ENCODE measurements at regions of chr6 and their contacts with region 1.

Region 1: GRCh38 chr6:21953831-21954801 is 342.7 kb downstream of the PRL start:
- DNase-seq: no peak
- H3K4me3 ChIP-seq: no peak overlapping the region
- H3K27ac ChIP-seq: no peak overlapping the region
- H3K4me1 ChIP-seq: peaks cover 0 to 9% (median 3%) of the 10 kb centered on the region in 4 experiments; a peak in 4 of 7 replicates
- H3K27me3 ChIP-seq: no peaks in the 10 kb centered on the region
- CTCF ChIP-seq: no peak
- EP300 ChIP-seq: no peak
- POLR2A ChIP-seq: no peak
- RAD21 ChIP-seq: no peak

Region 2: DNA sequence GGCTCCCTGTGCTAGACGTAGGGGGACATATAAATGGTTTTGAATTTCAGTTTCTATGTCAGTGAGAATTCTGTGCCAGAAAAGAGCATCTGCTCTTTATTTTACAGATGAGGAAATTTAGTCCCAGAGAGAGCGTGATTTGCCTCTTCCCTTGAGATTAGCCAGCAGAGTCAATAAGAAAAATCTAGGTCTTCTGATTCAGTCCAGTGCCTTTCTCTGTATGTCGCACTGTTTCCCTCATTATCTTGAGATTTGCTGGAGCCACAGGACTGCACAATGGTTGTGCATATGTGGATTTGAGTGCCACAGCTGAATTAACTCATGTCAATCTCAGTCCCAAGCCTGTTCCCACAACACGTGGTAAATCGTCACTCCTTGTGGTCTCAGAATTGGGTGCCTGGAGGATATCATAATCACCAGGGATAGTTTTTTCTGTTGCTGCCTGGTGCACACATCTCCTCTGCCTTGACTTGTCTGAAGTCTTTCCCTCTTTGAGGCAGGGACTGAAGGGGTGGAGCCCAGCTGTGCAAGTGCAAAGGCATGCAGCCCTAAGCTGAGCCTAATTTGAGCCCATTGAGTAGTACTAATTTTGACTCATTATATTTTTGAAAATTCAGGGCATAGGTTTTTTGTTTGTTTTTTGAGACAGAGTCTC is 83.9 kb before region 1 on chr6:
- CTCF ChIA-PET with region 1: no interaction called
- POLR2A ChIA-PET with region 1: no interaction called
- DNase-seq: no peak
- H3K4me3 ChIP-seq: no peak overlapping the region
- H3K27ac ChIP-seq: no peak overlapping the region
- H3K4me1 ChIP-seq: peaks cover 0 to 10% (median 2%) of the 10 kb centered on the region in 4 experiments; a peak in 4 of 7 replicates
- H3K27me3 ChIP-seq: no peaks in the 10 kb centered on the region
- CTCF ChIP-seq: no peak
- EP300 ChIP-seq: no peak
- POLR2A ChIP-seq: no peak
- RAD21 ChIP-seq: no peak

Region 3: DNA sequence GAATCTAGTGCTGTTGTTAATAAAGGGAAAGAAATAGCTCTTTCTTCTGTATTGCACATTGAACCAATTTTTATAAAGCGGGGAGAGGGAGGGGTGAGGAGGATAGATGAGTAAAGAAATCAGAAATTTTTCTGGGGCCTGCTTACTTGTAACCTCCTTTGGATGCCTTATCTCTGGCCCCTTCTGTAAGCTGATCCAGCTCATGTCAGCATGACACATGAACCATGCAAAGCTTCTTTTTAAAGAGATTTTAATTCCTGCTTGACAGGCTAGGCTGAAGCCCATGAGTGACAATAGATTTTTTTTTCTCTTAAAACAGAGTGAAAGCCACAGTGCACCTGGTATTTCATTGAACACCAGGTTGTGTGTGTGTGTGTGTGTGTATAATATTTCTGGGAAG is 17.4 kb after region 1 on chr6:
- CTCF ChIA-PET with region 1: interaction called, 10 read pairs
- POLR2A ChIA-PET with region 1: no interaction called
- DNase-seq: no peak
- H3K4me3 ChIP-seq: no peak overlapping the region
- H3K27ac ChIP-seq: no peak overlapping the region
- H3K4me1 ChIP-seq: peaks cover 0 to 2% (median 0%) of the 10 kb centered on the region in 4 experiments; a peak in 2 of 7 replicates
- H3K27me3 ChIP-seq: no peaks in the 10 kb centered on the region
- CTCF ChIP-seq: no peak
- EP300 ChIP-seq: no peak
- POLR2A ChIP-seq: no peak
- RAD21 ChIP-seq: no peak